Activated T-helper 2 cell treated with anti-CD3 and anti-CD28 coated beads, Interferon-gamma antibody, Interleukin-2, Interleukin-4, amounts not matched to agents 10 μg/mL and 5 μg/mL and 100 μg/mL, durations not matched to agents 14 hours and 24 hours and 36 hours (primary cell): ENCODE measurements at regions of chr5 and their contacts with region 1.

Region 1: DNA sequence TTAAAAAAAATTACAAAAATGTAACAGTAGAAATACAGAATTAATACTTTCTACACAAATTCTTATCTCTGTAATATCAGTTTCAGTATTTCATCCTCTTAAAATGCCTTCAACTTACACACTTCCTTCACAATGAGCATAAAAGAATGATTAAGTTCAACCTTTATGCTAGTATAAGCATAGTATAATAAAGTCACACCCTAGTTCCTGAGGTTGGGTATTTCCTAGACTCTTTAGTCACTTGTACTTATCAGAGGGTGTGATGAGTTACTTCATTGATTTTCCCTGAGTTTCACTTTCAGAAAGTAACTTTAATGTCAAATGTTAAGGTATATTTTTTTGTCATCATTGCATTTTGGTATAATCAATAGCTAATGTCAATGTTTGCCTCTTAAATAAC is 302.4 kb downstream of the PDE4D start:
- DNase-seq: no peak
- H3K4me3 Mint-ChIP-seq: no peak overlapping the region
- H3K27ac Mint-ChIP-seq: no peak overlapping the region
- H3K4me1 Mint-ChIP-seq: peaks cover 19% of the 10 kb centered on the region
- H3K27me3 Mint-ChIP-seq: peaks cover 27% of the 10 kb centered on the region

Region 2: GRCh38 chr5:58545912-58546311 is 1045.2 kb before region 1 on chr5:
- intact Hi-C with region 1: no loop called
- DNase-seq: no peak
- H3K4me3 Mint-ChIP-seq: no peak overlapping the region
- H3K27ac Mint-ChIP-seq: no peak overlapping the region
- H3K4me1 Mint-ChIP-seq: no peaks in the 10 kb centered on the region
- H3K27me3 Mint-ChIP-seq: no peaks in the 10 kb centered on the region

Region 3: GRCh38 chr5:59483971-59484472 is 107.1 kb before region 1 on chr5:
- intact Hi-C with region 1: loop called (anchors 2 kb)
- DNase-seq: no peak
- H3K4me3 Mint-ChIP-seq: peak overlapping the region; percentile 13
- H3K27ac Mint-ChIP-seq: peak overlapping the region; percentile 79
- H3K4me1 Mint-ChIP-seq: peaks cover 20% of the 10 kb centered on the region
- H3K27me3 Mint-ChIP-seq: peaks cover 4% of the 10 kb centered on the region

Region 4: GRCh38 chr5:59517926-59518585 is 73.1 kb before region 1 on chr5:
- intact Hi-C with region 1: no loop called
- DNase-seq: no peak
- H3K4me3 Mint-ChIP-seq: no peak overlapping the region
- H3K27ac Mint-ChIP-seq: no peak overlapping the region
- H3K4me1 Mint-ChIP-seq: no peaks in the 10 kb centered on the region
- H3K27me3 Mint-ChIP-seq: no peaks in the 10 kb centered on the region

Region 5: DNA sequence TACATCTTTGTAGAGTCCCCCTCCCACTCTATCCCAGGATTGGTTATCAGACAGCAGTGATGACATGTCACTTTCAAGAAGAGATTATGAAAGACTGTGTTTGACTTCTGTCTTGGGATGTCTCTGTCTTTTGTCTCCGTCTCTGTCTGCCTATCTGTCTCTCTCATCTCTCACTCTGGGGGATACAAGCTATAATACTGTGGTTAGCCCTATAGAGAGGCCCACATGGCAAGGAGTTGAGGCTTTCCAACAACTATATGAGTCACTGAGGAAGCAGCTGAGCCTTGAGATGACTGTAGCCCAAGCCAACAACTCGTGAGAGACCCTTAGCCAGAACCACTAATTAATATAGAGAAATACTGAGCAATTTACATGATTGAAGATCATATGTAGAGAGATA is 17.6 kb after region 1 on chr5:
- intact Hi-C with region 1: loop called (anchors 1 kb)
- DNase-seq: no peak
- H3K4me3 Mint-ChIP-seq: no peak overlapping the region
- H3K27ac Mint-ChIP-seq: no peak overlapping the region
- H3K4me1 Mint-ChIP-seq: peaks cover 19% of the 10 kb centered on the region
- H3K27me3 Mint-ChIP-seq: peaks cover 30% of the 10 kb centered on the region

Region 6: GRCh38 chr5:59656351-59657254 is 65.4 kb after region 1 on chr5:
- intact Hi-C with region 1: loop called (anchors 5 kb)
- DNase-seq: no peak
- H3K4me3 Mint-ChIP-seq: no peak overlapping the region
- H3K27ac Mint-ChIP-seq: no peak overlapping the region
- H3K4me1 Mint-ChIP-seq: peaks cover 7% of the 10 kb centered on the region
- H3K27me3 Mint-ChIP-seq: peaks cover 2% of the 10 kb centered on the region

Region 7: GRCh38 chr5:59790399-59791125 is 199.4 kb after region 1 on chr5:
- intact Hi-C with region 1: loop called (anchors 2 kb)
- DNase-seq: no peak
- H3K4me3 Mint-ChIP-seq: peak overlapping the region; percentile 54
- H3K27ac Mint-ChIP-seq: peak overlapping the region; percentile 97
- H3K4me1 Mint-ChIP-seq: peaks cover 52% of the 10 kb centered on the region
- H3K27me3 Mint-ChIP-seq: peaks cover 1% of the 10 kb centered on the region

Region 8: DNA sequence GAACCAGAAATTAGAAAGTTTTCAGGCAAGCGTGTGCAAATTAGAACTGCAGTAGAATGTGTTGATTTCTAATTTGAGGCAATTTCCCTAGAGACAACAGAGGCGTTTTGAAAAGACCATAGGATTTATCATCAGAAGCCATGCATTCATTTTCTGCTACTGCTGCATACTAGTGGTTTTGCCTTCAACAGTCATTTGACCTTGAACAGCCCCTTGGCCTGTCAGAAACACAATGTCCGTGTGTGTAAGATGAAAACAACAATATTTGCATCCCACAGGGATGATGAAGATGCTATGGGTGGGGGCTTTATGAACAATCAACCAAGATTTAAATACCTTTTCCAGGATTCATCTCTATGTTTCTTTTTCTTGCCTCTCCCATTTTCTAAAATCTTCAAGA is 228.6 kb after region 1 on chr5:
- intact Hi-C with region 1: no loop called
- DNase-seq: no peak
- H3K4me3 Mint-ChIP-seq: no peak overlapping the region
- H3K27ac Mint-ChIP-seq: no peak overlapping the region
- H3K4me1 Mint-ChIP-seq: no peaks in the 10 kb centered on the region
- H3K27me3 Mint-ChIP-seq: peaks cover 19% of the 10 kb centered on the region